ENCODE measurements at regions of chr4 and their contacts with region 1.

Region 1: DNA sequence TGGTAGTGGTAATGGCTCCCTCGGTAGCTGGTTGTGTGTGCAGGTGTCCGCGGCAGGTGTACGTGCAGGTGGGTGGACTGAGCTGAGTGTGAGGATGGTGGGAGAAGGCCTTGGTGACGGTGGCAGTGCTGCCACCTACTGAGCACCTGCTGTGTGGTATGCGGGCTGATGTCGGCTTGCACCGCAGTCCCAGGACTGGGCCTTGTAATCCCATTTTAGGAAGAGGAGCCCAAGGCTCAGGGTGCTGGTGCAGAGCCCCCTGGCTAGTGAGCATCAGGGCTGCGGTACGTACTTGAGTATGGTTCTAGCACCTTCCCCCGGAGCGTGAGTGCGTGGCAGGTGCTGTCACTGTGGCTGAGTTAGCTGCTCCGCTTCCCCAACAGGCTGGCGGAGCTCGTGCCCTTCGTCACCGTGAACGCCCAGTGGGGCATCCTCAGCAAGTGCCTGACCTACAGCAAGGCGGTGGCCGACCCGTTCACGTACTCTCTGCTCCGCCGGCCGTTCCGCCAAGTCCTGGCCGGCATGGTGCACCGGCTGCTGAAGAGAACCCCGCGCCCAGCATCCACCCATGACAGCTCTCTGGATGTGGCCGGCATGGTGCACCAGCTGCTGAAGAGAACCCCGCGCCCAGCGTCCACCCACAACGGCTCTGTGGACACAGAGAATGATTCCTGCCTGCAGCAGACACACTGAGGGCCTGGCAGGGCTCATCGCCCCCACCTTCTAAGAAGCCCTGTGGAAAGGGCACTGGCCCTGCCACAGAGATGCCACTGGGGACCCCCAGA is 5.7 kb upstream of the CPZ start:
- DNase-seq: peak; percentile 11
- H3K4me3 ChIP-seq: no peak overlapping the region
- H3K27ac ChIP-seq: no peak overlapping the region
- H3K4me1 ChIP-seq: no peaks in the 10 kb centered on the region
- CTCF ChIP-seq: peak; percentile 65

Region 2: DNA sequence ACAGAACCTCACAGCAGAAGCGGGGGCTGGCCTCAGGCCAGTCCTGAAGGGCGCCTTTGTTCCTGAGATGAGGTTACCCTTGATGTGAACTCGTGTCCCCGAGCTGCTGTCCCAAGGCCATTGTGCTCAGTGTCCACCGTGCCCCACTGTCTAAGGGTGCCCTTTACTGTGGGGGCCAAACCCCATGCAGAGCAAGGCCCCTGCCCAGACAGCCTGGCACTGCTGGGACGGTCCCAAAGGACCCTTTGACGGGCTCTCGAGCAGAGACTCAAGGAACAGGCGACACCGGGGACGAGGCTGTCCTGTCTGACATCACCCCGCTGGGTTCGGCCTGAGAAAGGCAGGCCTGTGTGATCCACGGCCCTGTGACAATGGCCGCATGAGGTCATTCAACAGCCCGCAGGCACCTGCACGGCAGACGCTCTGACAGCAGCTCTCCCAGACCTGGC is 528.8 kb before region 1 on chr4:
- CTCF ChIA-PET with region 1: no interaction called
- POLR2A ChIA-PET with region 1: no interaction called
- intact Hi-C with region 1: no loop called
- DNase-seq: no peak
- H3K4me3 ChIP-seq: no peak overlapping the region
- H3K27ac ChIP-seq: no peak overlapping the region
- H3K4me1 ChIP-seq: no peaks in the 10 kb centered on the region
- CTCF ChIP-seq: no peak

Region 3: DNA sequence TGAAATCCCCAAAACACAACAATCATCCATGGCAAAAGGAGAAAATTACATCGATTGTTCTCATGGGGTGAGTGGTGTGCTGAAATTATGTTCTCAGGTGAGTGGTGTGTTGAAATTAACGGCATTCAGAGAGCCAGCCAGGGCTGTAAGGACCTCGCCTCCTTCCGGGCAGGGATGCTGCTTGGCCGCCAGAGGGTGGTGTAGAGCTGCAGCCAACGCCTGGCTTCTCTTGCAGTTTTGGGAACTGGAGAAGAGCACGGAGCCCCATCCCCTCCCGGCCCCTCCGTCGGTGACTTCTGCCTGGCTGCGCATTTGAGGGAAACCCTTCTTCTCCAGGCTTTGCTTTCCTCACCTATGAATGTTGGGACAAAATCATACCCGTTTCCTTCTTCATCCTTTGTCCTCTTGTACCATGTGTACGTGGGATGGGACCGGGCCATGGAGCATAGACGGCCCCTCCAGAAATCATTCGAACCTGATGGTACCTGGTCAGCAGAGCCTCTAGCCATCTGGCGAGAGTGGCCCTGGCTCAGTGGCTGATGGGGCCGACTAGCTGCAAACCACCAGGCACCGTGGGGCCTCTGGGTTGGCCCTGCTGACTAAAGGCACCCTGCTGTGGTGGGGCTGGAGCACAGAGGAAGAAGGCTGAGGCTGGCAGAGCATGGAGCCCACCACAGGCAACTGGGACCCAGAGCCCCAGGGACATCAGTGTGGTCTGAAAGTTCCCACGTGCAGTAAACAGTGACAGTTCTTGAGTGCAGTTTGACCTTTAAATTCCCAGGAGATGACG is 117.9 kb before region 1 on chr4:
- CTCF ChIA-PET with region 1: no interaction called
- POLR2A ChIA-PET with region 1: no interaction called
- intact Hi-C with region 1: loop called (anchors 1 kb)
- DNase-seq: peak; percentile 61
- H3K4me3 ChIP-seq: no peak overlapping the region
- H3K27ac ChIP-seq: no peak overlapping the region
- H3K4me1 ChIP-seq: no peaks in the 10 kb centered on the region
- CTCF ChIP-seq: peak; percentile 95

Region 4: GRCh38 chr4:8599657-8600056 is 12.8 kb after region 1 on chr4:
- CTCF ChIA-PET with region 1: no interaction called
- POLR2A ChIA-PET with region 1: no interaction called
- intact Hi-C with region 1: no loop called
- DNase-seq: no peak
- H3K4me3 ChIP-seq: no peak overlapping the region
- H3K27ac ChIP-seq: no peak overlapping the region
- H3K4me1 ChIP-seq: no peaks in the 10 kb centered on the region
- CTCF ChIP-seq: no peak

Region 5: DNA sequence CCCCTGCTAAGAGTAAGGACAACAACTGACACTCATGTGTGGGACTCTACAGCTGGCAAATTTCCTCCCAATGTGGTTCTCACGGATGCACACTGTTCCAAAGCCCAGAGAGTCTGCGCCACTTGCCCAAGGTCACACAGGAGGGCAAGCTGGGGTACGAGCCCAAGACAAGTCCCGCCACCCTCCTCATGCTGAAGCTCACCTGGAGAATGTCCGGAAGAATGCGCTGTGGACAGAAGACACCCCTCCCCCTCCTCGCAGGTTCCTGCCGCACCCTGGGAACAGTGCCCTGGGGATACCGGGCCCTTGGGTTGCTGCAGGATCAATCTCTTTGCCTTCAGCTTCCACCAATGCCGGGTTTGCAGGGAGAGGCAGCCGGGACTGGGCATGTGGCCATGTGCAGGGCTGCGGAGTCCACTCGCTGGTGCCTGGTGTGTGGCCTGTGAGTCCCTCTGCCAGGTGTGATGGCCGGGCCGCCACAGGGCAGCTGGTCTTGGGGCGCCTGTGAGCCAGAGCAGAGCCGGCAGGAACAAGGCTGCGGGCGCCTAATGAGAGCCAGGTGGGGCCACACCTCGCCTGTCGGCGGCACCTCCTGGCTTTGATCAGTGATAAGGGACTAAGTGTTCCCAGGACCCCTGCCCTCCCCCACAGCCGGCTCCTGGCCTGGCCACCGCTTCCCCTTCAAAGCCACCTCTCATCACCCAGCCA is 138.1 kb after region 1 on chr4:
- CTCF ChIA-PET with region 1: no interaction called
- POLR2A ChIA-PET with region 1: no interaction called
- intact Hi-C with region 1: no loop called
- DNase-seq: no peak
- H3K4me3 ChIP-seq: no peak overlapping the region
- H3K27ac ChIP-seq: no peak overlapping the region
- H3K4me1 ChIP-seq: no peaks in the 10 kb centered on the region
- CTCF ChIP-seq: no peak

Measured in OCI-LY7 (cell line).